ENCODE measurements at regions of chr6 and their contacts with region 1.

Region 1: GRCh38 chr6:157632821-157633220 is 190.2 kb upstream of the SNX9 start:
- DNase-seq: peak; percentile 56

Region 2: DNA sequence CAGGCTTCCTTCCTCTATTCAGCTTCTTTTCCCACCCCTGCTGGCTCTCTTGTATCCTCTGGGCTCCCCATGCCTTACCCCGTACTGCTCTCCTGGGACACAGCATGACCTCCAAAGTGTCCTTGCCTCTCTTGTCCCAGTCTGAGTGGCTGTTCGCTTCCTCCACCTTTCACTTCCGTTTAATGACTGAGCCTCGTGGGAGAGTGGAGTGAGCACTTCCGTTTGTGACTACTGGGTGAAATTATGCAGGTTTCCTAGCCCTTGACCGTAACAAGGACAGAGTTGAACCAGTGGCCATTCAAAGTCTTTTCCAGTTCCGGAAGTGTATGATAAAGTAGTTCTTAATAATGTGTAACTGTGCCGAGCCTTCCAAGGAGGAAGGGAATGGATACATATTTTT is 746.4 kb before region 1 on chr6:
- intact Hi-C with region 1: no loop called
- DNase-seq: no peak

Region 3: GRCh38 chr6:158571826-158572652 is 939.2 kb after region 1 on chr6:
- intact Hi-C with region 1: loop called in 1 of 2 experiments (anchors 10 kb)
- DNase-seq: peak; percentile 78

Measured in posterior vena cava (tissue), 2 donors.